Activated T-helper 2 cell treated with anti-CD3 and anti-CD28 coated beads, Interferon-gamma antibody, Interleukin-2, Interleukin-4, amounts not matched to agents 10 μg/mL and 5 μg/mL and 100 μg/mL, durations not matched to agents 14 hours and 24 hours and 36 hours (primary cell): ENCODE measurements at regions of chr17 and their contacts with region 1.

Region 1: GRCh38 chr17:68512247-68512982 is at the start of gene PRKAR1A:
- DNase-seq: peak; percentile 90
- H3K4me3 Mint-ChIP-seq: peak within 1 kb of the TSS; percentile 100
- H3K27ac Mint-ChIP-seq: peak within 1 kb of the TSS; percentile 100
- H3K4me1 Mint-ChIP-seq: peaks cover 59% of the 10 kb centered on the region
- H3K27me3 Mint-ChIP-seq: no peaks in the 10 kb centered on the region
- total RNA-seq, gene PRKAR1A: 263 and 265 TPM in 2 replicates

Region 2: DNA sequence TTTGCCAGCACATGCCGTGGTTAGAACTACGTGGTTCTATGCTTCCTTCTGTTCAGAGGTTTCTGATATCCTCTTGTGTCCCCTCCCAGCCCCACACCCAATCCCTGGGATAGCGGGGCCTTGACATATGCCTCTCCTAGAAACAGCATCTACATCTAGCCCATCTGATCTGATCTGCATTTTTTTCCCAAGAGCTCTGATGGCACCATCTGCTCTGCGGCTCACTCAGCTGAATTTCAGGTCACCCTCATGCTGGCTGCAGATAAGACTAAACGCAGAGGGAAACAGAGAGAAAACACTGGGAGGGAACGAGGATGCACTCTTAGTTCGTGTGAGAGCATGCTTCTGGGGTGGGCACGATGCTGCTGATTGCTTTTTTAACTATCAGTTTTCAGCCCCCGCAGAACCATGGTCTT is 65.8 kb before region 1 on chr17:
- intact Hi-C with region 1: no loop called
- DNase-seq: no peak
- H3K4me3 Mint-ChIP-seq: no peak overlapping the region
- H3K27ac Mint-ChIP-seq: no peak overlapping the region
- H3K4me1 Mint-ChIP-seq: peaks cover 9% of the 10 kb centered on the region
- H3K27me3 Mint-ChIP-seq: no peaks in the 10 kb centered on the region

Region 3: GRCh38 chr17:68491381-68492231 is 20.8 kb before region 1 on chr17:
- intact Hi-C with region 1: loop called (anchors 1 kb)
- DNase-seq: no peak
- H3K4me3 Mint-ChIP-seq: no peak overlapping the region
- H3K27ac Mint-ChIP-seq: no peak overlapping the region
- H3K4me1 Mint-ChIP-seq: peaks cover 17% of the 10 kb centered on the region
- H3K27me3 Mint-ChIP-seq: peaks cover under 1% of the 10 kb centered on the region

Region 4: GRCh38 chr17:68497885-68498319 is 14.5 kb before region 1 on chr17:
- intact Hi-C with region 1: loop called (anchors 1 kb)
- DNase-seq: no peak
- H3K4me3 Mint-ChIP-seq: peak overlapping the region; percentile 38
- H3K27ac Mint-ChIP-seq: peak overlapping the region; percentile 81
- H3K4me1 Mint-ChIP-seq: peaks cover 28% of the 10 kb centered on the region
- H3K27me3 Mint-ChIP-seq: peaks cover 3% of the 10 kb centered on the region